ENCODE measurements at regions of chr14 and their contacts with region 1.

Region 1: DNA sequence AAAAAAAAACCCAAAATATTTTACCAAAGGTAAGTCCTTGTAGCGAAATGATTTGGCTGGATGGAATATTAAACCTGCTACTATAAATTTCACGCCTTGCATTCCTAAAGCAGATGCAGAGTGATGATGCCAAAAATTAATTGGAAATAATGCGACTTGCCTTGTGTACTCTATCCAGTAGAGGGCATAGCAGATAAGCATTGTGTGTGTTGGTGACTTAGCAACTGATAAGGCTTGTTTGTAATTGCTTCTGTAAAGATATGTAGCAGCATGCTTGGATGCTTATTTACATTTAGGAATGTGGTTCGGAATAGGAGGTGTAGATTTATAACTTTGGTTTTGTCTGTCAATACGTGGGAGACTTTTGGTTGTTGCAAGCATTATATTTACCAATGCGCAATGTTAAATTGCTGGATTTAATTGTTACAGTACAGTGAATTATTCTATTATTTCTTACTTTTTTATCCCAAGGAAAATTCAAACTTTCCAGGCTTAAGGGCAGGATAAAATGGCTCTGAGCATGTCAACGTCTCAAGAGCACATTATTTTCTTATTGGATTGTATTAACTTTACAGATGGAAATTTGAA is 80.5 kb downstream of the TMEM260 start:
- DNase-seq: peak; percentile 90
- H3K4me3 ChIP-seq: peak overlapping the region; percentile 29
- H3K27ac ChIP-seq: peak overlapping the region; percentile 84
- H3K4me1 ChIP-seq: peaks cover 25% of the 10 kb centered on the region
- H3K27me3 ChIP-seq: no peaks in the 10 kb centered on the region
- CTCF ChIP-seq: peak; percentile 94

Region 2: GRCh38 chr14:56065621-56066290 is 594.3 kb before region 1 on chr14:
- CTCF ChIA-PET with region 1: no interaction called
- POLR2A ChIA-PET with region 1: no interaction called
- intact Hi-C with region 1: no loop called
- DNase-seq: no peak
- H3K4me3 ChIP-seq: no peak overlapping the region
- H3K27ac ChIP-seq: no peak overlapping the region
- H3K4me1 ChIP-seq: no peaks in the 10 kb centered on the region
- H3K27me3 ChIP-seq: no peaks in the 10 kb centered on the region
- CTCF ChIP-seq: no peak

Region 3: DNA sequence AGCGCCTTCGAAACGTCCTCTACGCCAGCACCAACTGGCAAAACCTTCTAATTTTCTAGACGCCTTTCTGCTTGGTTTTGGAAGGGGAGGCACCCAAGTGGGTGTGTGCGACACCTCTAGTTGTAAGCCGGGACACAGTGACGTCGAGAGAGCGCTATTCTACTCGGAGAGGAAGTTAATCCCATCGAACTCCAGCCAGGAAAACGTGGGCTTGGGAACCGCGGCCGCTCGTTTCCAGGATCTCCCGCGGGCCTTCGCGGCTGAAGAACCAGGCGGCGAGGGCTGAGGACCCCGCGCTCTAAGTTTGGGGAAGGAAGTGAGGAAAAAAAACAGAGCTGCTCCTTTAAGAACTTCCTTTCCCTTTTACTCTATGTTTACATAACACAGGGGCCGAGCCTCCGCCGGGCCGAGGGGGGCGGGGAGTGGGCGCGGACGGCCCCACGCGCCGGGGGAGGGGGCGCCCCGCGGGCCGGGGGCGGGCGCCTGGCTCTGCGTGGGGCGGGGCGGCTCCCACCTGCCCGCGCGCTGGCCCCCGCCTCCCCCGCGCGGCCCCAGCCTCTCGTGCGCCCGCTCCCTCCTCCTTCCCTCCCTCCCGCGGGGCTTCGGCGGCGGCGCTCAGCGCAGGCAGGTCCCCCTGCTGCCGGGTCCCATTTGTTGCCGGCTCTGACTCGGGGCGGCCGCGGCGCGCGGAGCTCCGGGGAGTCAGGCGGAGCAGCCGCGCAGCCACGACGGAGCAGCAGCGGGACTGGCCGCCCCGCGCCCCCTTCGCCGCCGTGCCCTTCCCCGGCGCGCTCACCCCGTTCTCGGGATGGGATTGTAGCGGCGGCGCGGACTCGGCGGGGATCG is 542.1 kb before region 1 on chr14 and contains the start of gene PELI2:
- CTCF ChIA-PET with region 1: interaction called, 11 read pairs
- POLR2A ChIA-PET with region 1: no interaction called
- intact Hi-C with region 1: no loop called
- DNase-seq: peak; percentile 86
- H3K4me3 ChIP-seq: peak within 1 kb of the TSS; percentile 86
- H3K27ac ChIP-seq: peak within 1 kb of the TSS; percentile 69
- H3K4me1 ChIP-seq: peaks cover 12% of the 10 kb centered on the region
- H3K27me3 ChIP-seq: peaks cover 37% of the 10 kb centered on the region
- CTCF ChIP-seq: no peak
- total RNA-seq, gene PELI2: 5.5 and 8.1 TPM in 2 replicates

Region 4: DNA sequence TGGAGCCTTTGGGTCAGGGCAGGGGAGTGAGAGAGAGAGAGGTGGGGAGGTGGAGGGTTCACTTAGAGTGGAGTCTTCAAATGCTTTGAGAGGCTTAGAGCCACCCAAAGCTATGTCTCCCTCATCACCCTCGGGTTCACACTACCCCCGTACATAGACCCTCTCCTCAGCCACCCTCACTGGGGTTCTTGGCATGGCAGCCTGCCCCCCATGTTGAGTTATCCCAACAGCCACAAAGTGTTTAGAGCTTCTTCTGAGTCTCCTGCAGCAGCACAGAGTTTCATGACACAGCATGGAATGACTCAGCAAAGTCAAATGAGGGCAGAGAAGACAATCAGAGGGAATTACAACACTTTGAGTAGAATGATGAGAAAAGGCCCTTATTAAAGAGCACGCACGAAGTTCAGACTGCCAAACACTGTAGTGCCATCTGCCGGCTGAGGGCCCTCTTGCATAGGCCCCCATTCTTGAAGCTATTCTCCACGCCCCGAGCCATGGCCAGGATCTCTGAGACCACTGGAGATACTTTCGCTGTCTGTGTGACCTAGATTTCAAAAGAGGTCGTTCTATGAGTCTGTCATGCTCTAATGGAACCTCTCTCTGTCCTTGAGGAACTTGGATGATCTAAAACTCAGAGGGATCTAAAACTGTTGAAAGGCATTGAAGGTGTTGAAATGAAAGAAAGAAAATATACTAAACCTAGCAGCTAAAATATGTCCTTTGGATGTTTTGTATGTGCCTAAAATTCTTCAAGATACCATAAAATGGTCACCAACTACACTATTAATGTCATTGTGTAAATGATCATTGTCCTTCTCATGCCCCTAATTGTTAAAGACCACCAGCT is 320.0 kb before region 1 on chr14:
- CTCF ChIA-PET with region 1: no interaction called
- POLR2A ChIA-PET with region 1: no interaction called
- intact Hi-C with region 1: no loop called
- DNase-seq: peak; percentile 93
- H3K4me3 ChIP-seq: no peak overlapping the region
- H3K27ac ChIP-seq: no peak overlapping the region
- H3K4me1 ChIP-seq: peaks cover 21% of the 10 kb centered on the region
- H3K27me3 ChIP-seq: no peaks in the 10 kb centered on the region
- CTCF ChIP-seq: peak; percentile 95

Region 5: DNA sequence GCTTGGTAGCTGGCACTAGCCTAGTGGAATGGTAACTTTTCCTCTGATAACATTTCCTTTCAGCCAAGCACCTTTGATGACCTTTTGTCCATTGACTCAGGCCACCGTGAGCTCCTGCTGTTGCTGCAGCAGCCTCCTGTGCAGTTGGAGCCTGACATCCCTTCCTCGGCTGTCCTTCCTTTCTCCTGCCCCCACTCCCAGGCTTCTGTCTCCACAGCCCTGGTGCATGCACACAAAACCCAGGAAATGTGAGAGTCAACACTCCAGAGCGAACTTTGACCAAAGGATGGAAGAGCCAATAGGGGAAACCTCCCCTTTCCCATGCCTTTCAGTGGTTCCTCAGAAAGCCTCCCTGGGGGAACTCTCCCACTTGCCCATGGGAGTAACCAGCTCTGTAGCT is 34.6 kb after region 1 on chr14:
- CTCF ChIA-PET with region 1: no interaction called
- POLR2A ChIA-PET with region 1: interaction called, 11 read pairs
- intact Hi-C with region 1: no loop called
- DNase-seq: no peak
- H3K4me3 ChIP-seq: no peak overlapping the region
- H3K27ac ChIP-seq: no peak overlapping the region
- H3K4me1 ChIP-seq: no peaks in the 10 kb centered on the region
- H3K27me3 ChIP-seq: no peaks in the 10 kb centered on the region
- CTCF ChIP-seq: no peak

Region 6: DNA sequence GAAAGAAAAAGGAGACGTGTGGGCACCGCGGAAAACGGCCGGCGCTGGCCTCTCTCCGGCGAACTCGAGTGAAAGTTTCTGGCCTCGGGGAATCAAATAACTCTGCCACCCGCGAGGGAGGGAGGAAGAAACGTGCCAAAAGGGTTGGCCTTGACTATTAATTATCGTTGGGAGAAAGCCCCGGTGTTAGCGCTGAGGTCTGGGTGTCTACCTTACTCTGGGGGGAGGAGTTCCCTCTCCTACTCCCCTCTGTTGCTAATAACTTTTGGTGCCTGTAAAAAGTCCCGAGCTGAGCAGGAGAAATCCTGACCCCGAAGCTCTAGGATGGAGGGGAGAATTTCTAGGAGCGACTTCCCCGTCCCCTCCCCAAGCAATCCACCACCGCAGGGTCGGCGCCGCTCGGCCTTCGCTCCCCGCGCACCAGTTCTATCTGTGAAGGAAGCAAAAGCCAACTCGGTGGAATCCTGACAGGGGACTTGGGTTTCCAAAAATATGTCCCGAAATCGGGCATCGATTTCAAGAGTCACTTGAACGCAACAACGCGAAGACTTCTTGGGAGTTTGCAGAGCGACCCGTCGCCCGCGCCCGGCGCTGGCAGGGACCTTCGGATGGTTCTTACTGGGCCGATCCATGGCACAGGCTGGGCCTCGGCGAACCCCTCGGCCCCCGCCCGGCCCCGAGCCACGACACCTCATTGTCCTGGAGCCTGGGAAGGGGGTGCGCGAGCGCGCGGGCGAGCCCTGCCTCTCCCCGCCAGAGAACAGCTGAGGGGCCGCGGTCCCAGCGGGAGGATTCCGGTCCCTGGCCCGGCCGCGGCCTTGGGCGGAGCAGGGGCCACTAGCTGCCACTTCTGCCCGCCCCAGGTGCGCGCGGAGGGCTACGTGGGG is 148.6 kb after region 1 on chr14:
- CTCF ChIA-PET with region 1: no interaction called
- POLR2A ChIA-PET with region 1: no interaction called
- intact Hi-C with region 1: loop called (anchors 10 kb)
- DNase-seq: peak; percentile 75
- H3K4me3 ChIP-seq: peak overlapping the region; percentile 71
- H3K27ac ChIP-seq: peak overlapping the region; percentile 95
- H3K4me1 ChIP-seq: peaks cover 2% of the 10 kb centered on the region
- H3K27me3 ChIP-seq: no peaks in the 10 kb centered on the region
- CTCF ChIP-seq: no peak

Region 7: DNA sequence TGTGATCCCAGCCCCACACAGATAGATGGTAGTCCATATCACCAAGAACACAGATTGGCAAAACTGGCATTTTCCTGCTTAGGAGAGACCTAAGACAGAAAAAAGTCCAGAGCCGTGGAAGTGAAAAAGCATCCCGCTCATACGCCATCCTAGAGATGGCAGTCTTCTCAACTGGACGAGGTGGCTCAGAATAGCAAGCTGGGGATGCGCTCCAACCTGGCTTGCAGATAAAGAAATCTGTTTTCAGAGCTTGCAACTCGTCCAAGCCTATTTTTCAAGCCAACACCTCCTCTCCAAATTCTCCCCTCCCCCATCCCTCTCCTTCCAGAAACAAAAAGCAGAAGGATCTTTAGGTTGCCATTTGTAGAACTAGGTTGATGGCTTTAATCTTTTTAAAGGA is 224.6 kb after region 1 on chr14:
- CTCF ChIA-PET with region 1: no interaction called
- POLR2A ChIA-PET with region 1: no interaction called
- intact Hi-C with region 1: no loop called
- DNase-seq: no peak
- H3K4me3 ChIP-seq: no peak overlapping the region
- H3K27ac ChIP-seq: no peak overlapping the region
- H3K4me1 ChIP-seq: peaks cover 39% of the 10 kb centered on the region
- H3K27me3 ChIP-seq: no peaks in the 10 kb centered on the region
- CTCF ChIP-seq: no peak

Region 8: DNA sequence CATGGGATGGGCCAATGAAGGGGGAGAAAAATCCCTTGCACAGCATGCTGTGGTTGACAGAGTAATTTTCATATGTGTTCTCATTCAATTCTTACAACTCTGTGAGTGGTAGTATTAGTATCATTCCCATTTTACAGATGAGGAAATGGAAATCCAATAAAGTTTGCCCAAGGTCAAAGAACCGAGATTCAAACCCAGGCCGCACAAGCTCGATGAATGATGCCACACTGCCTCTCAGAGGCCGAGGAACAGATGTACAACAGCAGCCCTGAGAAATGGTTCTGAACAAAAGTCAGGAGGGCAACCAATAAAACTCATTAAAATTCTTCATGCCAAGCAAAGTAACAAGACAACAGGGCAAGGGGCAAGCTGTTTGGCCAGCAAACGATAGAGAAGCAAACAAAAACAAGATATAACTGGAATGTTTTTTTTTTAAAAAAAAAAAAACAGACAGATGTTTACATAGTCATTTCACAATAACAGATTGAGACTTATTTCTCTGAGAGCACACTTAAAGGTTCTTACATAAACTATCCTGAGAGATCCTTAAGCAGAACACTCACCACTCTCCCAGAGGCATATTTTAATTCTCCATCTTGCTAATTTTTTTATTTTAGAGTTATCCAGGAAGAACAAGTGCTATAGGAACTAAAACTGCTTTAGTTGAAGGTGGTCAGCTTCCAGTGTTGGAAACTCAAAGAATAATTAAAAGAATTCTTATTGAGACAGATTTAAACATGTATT is 522.9 kb after region 1 on chr14:
- CTCF ChIA-PET with region 1: no interaction called
- POLR2A ChIA-PET with region 1: no interaction called
- intact Hi-C with region 1: loop called (anchors 10 kb)
- DNase-seq: peak; percentile 76
- H3K4me3 ChIP-seq: no peak overlapping the region
- H3K27ac ChIP-seq: no peak overlapping the region
- H3K4me1 ChIP-seq: peaks cover 7% of the 10 kb centered on the region
- H3K27me3 ChIP-seq: no peaks in the 10 kb centered on the region
- CTCF ChIP-seq: peak; percentile 78